Panc1 (cell line): ENCODE measurements at regions of chr7 and their contacts with region 1.

Region 1: DNA sequence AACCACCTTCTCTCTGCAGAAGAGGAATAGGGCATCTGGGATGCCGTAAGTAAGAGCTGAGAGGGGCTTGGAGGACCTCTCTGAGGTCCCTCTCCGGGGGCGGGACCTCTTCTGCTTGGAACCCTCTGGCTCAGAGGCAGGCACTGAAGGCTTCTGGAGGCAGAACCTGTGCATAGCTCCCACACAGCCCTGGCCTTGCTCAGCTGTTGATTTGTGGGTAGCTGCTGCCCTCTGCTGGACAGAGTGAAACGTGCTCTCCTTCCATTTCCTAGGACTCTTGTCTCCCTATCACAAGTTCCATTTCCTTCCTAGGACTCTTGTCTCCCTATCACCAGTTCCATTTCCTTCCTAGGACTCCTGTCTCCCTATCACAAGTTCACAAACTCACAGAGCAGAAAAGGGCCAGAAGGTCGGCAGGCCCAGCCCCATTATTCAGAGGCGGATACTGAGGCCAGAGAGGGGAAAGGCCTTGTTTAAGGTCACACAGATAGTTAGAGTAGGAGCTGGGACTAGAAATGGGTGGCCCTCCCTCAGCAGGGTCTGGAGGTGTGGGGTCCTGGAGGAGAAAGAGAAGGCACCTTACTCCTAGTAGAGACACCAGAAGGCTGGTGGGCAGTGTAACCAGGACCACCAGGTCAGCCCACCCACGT is 30.3 kb upstream of the GARS1 start:
- DNase-seq: peak; percentile 76
- ATAC-seq: peak; percentile 98
- H3K4me3 ChIP-seq: no peak overlapping the region
- H3K27ac ChIP-seq: no peak overlapping the region
- H3K4me1 ChIP-seq: no peaks in the 10 kb centered on the region; the same call in 1 of the 2 replicates
- H3K27me3 ChIP-seq: no peaks in the 10 kb centered on the region
- CTCF ChIP-seq: peak; percentile 92

Region 2: DNA sequence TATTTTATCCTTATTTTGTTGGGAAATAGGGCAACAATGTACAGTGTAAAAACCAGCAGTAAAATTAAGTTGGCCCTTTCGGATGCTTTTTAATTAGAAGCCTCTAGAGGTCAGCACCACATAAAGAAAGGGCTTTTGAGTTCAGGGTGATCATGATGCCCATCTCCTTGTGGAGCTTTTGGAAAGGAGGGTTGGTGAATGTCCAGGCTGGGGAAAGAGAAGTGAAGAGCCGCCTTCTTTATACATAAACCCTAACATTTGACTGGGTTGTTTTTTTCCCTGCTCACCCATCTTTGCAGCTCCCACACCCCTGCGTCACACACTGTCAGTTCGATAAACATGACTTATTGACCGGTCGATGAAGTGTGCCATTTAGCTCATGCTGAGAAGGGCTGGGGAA is 399.8 kb before region 1 on chr7:
- CTCF ChIA-PET with region 1: interaction called, 5 read pairs
- POLR2A ChIA-PET with region 1: no interaction called
- in situ Hi-C with region 1: no loop called
- intact Hi-C with region 1: loop called (anchors 5 kb)
- DNase-seq: peak; percentile 30
- ATAC-seq: peak; percentile 77
- H3K4me3 ChIP-seq: no peak overlapping the region
- H3K27ac ChIP-seq: no peak overlapping the region
- H3K4me1 ChIP-seq: peaks cover 6% of the 10 kb centered on the region
- H3K27me3 ChIP-seq: peaks cover 5% of the 10 kb centered on the region; the same call in 1 of the 2 replicates
- CTCF ChIP-seq: peak; percentile 85

Region 3: DNA sequence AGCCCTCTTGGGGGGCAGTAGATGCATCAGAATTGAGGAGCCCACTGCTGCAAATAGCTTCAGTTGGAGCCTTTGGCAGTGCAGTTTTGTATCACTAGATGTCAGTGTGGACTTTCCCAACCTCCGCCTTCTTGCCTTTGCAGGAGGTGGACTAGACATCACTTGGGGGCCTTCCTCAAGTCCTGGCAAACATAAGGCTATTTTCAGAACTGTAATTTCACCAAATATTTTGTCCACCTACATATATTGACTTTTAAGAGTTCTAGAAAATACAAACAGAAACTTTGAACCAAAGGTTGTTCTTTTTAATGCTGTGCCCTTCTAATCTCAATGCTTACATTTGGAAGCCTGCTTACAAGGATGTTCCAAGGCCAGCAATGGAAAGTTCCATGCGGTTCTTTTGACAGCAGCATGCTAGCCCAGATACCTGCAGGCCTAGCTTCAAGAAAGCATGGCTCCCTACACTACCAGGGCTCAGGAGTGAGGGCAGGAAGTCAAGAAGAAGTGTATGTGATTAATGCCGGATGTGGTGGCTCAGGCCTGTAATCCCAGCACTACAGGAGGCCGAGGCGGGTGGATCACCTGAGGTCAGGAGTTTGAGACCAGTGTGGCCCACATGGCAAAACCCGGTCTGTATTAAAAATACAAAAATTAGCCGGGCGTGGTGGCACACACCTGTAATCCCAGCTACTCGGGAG is 288.0 kb before region 1 on chr7:
- CTCF ChIA-PET with region 1: interaction called, 9 read pairs
- POLR2A ChIA-PET with region 1: no interaction called
- in situ Hi-C with region 1: no loop called
- intact Hi-C with region 1: loop called (anchors 2 kb)
- DNase-seq: peak; percentile 63
- ATAC-seq: peak; percentile 96
- H3K4me3 ChIP-seq: no peak overlapping the region
- H3K27ac ChIP-seq: no peak overlapping the region
- H3K4me1 ChIP-seq: no peaks in the 10 kb centered on the region
- H3K27me3 ChIP-seq: no peaks in the 10 kb centered on the region; the same call in 1 of the 2 replicates
- CTCF ChIP-seq: peak; percentile 94

Region 4: GRCh38 chr7:30412810-30413504 is 151.4 kb before region 1 on chr7:
- CTCF ChIA-PET with region 1: no interaction called
- POLR2A ChIA-PET with region 1: no interaction called
- in situ Hi-C with region 1: no loop called
- intact Hi-C with region 1: loop called (anchors 5 kb)
- DNase-seq: peak; percentile 52
- ATAC-seq: peak; percentile 94
- H3K4me3 ChIP-seq: no peak overlapping the region
- H3K27ac ChIP-seq: no peak overlapping the region
- H3K4me1 ChIP-seq: no peaks in the 10 kb centered on the region
- H3K27me3 ChIP-seq: no peaks in the 10 kb centered on the region
- CTCF ChIP-seq: peak; percentile 58

Region 5: GRCh38 chr7:30510124-30511075 is 54.0 kb before region 1 on chr7:
- CTCF ChIA-PET with region 1: interaction called, 12 read pairs
- POLR2A ChIA-PET with region 1: no interaction called
- in situ Hi-C with region 1: no loop called
- intact Hi-C with region 1: loop called (anchors 5 kb)
- DNase-seq: peak; percentile 28
- ATAC-seq: peak; percentile 67
- H3K4me3 ChIP-seq: no peak overlapping the region
- H3K27ac ChIP-seq: no peak overlapping the region
- H3K4me1 ChIP-seq: peaks cover 2% of the 10 kb centered on the region; the same call in 1 of the 2 replicates
- H3K27me3 ChIP-seq: no peaks in the 10 kb centered on the region
- CTCF ChIP-seq: peak; percentile 87; the same call in 1 of the 2 replicates

Region 6: GRCh38 chr7:30548762-30549344 is 15.5 kb before region 1 on chr7:
- CTCF ChIA-PET with region 1: interaction called, 14 read pairs
- POLR2A ChIA-PET with region 1: no interaction called
- in situ Hi-C with region 1: no loop called
- intact Hi-C with region 1: no loop called
- DNase-seq: peak; percentile 55
- ATAC-seq: peak; percentile 94
- H3K4me3 ChIP-seq: no peak overlapping the region
- H3K27ac ChIP-seq: no peak overlapping the region
- H3K4me1 ChIP-seq: peaks cover 3% of the 10 kb centered on the region; the same call in 1 of the 2 replicates
- H3K27me3 ChIP-seq: no peaks in the 10 kb centered on the region
- CTCF ChIP-seq: peak; percentile 96

Region 7: GRCh38 chr7:30771174-30771879 is 207.0 kb after region 1 on chr7 and contains the start of gene MINDY4:
- CTCF ChIA-PET with region 1: no interaction called
- POLR2A ChIA-PET with region 1: no interaction called
- in situ Hi-C with region 1: no loop called
- intact Hi-C with region 1: no loop called
- DNase-seq: no peak
- ATAC-seq: peak; percentile 99
- H3K4me3 ChIP-seq: peak within 1 kb of the TSS; percentile 70 to 75
- H3K27ac ChIP-seq: peak within 1 kb of the TSS; percentile 81
- H3K4me1 ChIP-seq: peaks cover 8% of the 10 kb centered on the region
- H3K27me3 ChIP-seq: no peaks in the 10 kb centered on the region; the same call in 1 of the 2 replicates
- CTCF ChIP-seq: no peak
- total RNA-seq, gene MINDY4: 6.2 TPM

Region 8: GRCh38 chr7:31382722-31383121 is 818.4 kb after region 1 on chr7:
- CTCF ChIA-PET with region 1: no interaction called
- POLR2A ChIA-PET with region 1: no interaction called
- in situ Hi-C with region 1: no loop called
- intact Hi-C with region 1: no loop called
- DNase-seq: no peak
- ATAC-seq: no peak
- H3K4me3 ChIP-seq: no peak overlapping the region
- H3K27ac ChIP-seq: no peak overlapping the region
- H3K4me1 ChIP-seq: no peaks in the 10 kb centered on the region
- H3K27me3 ChIP-seq: no peaks in the 10 kb centered on the region
- CTCF ChIP-seq: no peak